ENCODE measurements at regions of chr11 and their contacts with region 1.

Region 1: DNA sequence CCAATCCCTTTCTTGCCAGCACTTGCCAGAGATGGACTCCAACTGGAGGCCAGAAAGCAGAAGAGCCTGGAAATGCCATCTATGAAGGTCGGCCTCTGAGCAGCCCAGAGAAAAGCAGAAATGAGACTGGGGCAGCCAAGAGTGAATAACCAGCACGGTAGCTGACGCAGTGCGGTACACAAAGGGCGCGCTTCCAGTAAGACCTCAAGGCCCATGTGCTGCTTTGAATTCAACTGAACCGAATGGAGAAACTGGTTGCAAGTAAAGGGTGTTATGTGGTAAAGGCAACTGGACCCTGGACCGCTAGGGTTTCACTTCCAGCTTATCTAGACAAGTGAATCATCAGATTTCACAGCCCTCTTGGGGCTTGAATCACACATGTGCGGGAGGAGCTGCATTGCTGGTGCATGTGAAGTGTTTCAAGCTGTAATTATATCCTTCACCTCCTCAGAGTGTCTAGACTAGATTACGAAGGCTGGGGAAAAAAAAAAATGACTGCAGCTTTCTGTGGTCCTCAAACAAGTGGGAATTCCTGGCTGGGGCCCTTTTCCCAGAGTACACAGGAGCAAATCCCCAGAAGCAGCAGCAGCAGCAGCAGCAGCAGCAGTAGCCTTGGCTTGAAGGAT is 128.9 kb downstream of the CCDC34 start:
- DNase-seq: no peak
- H3K4me3 ChIP-seq: no peak overlapping the region
- H3K27ac ChIP-seq: no peak overlapping the region
- H3K4me1 ChIP-seq: peaks cover 0 to 1% (median 0%) of the 10 kb centered on the region in 4 experiments; a peak in 3 of 7 replicates
- H3K27me3 ChIP-seq: no peaks in the 10 kb centered on the region
- CTCF ChIP-seq: no peak
- EP300 ChIP-seq: no peak
- POLR2A ChIP-seq: no peak
- RAD21 ChIP-seq: no peak

Region 2: DNA sequence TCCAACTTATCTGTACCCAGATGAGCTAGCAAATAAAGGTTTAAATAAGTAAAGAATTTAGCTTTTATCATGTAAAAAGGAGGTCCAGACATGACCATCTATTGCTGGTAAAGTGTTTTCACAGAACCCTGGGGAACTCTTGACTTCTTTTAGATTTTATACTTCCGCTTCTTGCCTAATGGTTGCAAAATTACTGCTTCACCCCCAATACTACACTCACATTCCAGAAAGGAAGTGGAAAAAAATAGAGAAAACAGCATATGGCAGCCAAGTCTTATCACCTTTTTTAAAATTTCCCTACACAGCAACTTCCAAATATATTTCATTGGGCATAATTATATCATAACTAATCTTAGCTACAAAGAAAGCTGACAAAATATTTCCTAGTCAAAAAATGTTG is 181.5 kb before region 1 on chr11:
- CTCF ChIA-PET with region 1: no interaction called
- POLR2A ChIA-PET with region 1: no interaction called
- DNase-seq: no peak
- H3K4me3 ChIP-seq: no peak overlapping the region
- H3K27ac ChIP-seq: no peak overlapping the region
- H3K4me1 ChIP-seq: no peaks in the 10 kb centered on the region
- H3K27me3 ChIP-seq: no peaks in the 10 kb centered on the region
- CTCF ChIP-seq: no peak
- EP300 ChIP-seq: no peak
- POLR2A ChIP-seq: no peak
- RAD21 ChIP-seq: no peak

Region 3: GRCh38 chr11:27209562-27210005 is 24.6 kb before region 1 on chr11:
- CTCF ChIA-PET with region 1: interaction called, 16 read pairs
- POLR2A ChIA-PET with region 1: interaction called, 6 read pairs
- DNase-seq: no peak
- H3K4me3 ChIP-seq: no peak overlapping the region
- H3K27ac ChIP-seq: no peak overlapping the region
- H3K4me1 ChIP-seq: no peaks in the 10 kb centered on the region
- H3K27me3 ChIP-seq: no peaks in the 10 kb centered on the region
- CTCF ChIP-seq: no peak
- EP300 ChIP-seq: no peak
- POLR2A ChIP-seq: no peak
- RAD21 ChIP-seq: no peak

Region 4: DNA sequence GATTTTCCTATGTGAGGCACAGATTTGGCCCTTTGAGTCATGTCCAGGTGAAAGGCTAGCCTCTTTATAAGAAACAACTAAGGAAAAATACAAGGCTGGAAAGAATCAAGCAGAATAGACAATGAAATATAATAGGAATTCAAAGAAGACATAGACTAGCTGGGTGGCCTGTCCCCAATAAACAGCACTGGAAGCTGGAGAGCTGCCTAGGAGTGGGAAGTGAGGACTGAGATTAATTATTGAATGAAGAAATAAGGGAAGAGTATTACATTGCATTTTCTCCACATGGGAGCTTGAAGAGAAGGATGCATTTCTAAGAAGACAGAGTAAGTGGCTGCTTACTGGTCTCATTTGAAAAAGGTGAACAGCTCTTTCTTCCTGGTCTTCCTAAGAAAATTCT is 28.9 kb after region 1 on chr11:
- CTCF ChIA-PET with region 1: no interaction called
- POLR2A ChIA-PET with region 1: no interaction called
- DNase-seq: no peak
- H3K4me3 ChIP-seq: no peak overlapping the region
- H3K27ac ChIP-seq: no peak overlapping the region
- H3K4me1 ChIP-seq: no peaks in the 10 kb centered on the region
- H3K27me3 ChIP-seq: no peaks in the 10 kb centered on the region
- CTCF ChIP-seq: no peak
- EP300 ChIP-seq: no peak
- POLR2A ChIP-seq: no peak
- RAD21 ChIP-seq: no peak